ENCODE measurements at regions of chr1 and their contacts with region 1.

Region 1: DNA sequence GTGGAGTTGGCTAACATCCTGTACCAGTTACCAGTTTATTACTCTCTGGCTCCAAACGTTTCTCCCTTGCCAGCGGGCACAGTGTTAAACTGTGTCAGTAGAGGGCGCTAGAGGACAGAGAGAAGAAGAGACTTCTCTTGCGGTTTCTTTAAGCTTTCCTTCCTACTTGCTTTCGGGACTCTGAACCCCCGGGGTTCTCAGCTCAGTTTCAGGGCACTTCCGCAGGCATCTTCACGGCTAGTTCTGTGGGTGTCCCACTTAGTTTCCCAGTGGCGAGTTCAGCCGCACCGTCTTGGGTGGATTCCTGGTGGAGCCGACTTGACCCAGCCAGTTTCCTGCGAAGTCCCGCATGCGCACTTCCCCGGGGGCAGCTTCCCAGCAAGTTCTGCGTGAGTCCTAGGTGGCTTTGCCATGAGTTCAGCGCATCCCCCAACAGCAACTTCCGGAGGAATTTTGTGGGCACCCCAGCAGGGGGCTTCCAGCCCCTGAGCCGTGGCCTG is 37.9 kb upstream of the BTG2 start:
- DNase-seq: peak; percentile 83 to 88 (median 85)
- H3K4me3 ChIP-seq: peak overlapping the region; percentile 64 to 85
- H3K4me3 Mint-ChIP-seq: peak overlapping the region; percentile 84 to 92 (median 89)
- H3K27ac ChIP-seq: peak overlapping the region; percentile 75
- H3K27ac Mint-ChIP-seq: peak overlapping the region; percentile 79 to 96 (median 93)
- H3K4me1 ChIP-seq: peaks cover 32% of the 10 kb centered on the region
- H3K4me1 Mint-ChIP-seq: peaks cover 11 to 26% (median 22%) of the 10 kb centered on the region in 4 donors
- H3K27me3 ChIP-seq: no peaks in the 10 kb centered on the region
- H3K27me3 Mint-ChIP-seq: peaks cover 1 to 2% of the 10 kb centered on the region in 2 donors

Region 2: DNA sequence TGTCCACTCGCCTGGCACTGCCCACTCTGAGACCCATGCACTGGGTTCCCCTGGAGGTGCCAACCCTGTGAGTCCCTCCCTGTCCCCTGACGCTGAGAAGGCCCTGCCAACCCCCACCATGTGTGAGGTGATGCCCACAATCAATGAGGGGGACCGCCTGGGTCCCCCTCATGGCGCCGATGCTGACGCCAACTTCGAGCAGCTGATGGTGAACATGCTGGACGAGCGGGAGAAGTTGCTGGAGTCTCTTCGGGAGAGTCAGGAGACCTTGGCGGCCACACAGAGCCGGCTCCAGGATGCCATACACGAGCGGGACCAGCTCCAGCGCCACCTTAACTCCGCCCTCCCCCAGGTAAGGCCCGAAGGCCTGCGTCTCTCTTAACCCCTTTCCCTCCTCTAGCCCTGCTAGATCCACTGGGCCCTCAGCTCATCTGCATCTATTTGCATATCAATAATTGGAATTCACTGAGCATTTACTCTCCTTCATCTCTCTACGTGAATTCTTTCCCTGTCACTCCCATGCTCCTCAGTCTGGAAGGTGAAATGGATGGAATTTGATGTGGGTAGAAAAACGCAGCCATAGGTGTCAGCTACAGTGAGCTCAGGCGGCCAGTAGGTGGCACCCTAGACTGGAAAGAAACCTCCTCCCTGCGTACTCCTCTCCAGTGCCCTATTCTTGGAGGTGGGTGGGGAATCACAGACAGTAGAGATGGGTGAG is 228.3 kb before region 1 on chr1:
- CTCF ChIA-PET with region 1: interaction called, 56 read pairs
- POLR2A ChIA-PET with region 1: interaction called, 5 read pairs
- intact Hi-C with region 1: loop called (anchors 1 kb)
- DNase-seq: peak; percentile 50 to 55 (median 54)
- H3K4me3 ChIP-seq: no peak overlapping the region
- H3K4me3 Mint-ChIP-seq: no peak overlapping the region
- H3K27ac ChIP-seq: no peak overlapping the region
- H3K27ac Mint-ChIP-seq: no peak overlapping the region
- H3K4me1 ChIP-seq: no peaks in the 10 kb centered on the region
- H3K4me1 Mint-ChIP-seq: peaks cover 2 to 6% (median 4%) of the 10 kb centered on the region in 4 donors
- H3K27me3 ChIP-seq: no peaks in the 10 kb centered on the region
- H3K27me3 Mint-ChIP-seq: peaks cover 3 to 8% of the 10 kb centered on the region in 2 donors

Region 3: GRCh38 chr1:203239526-203240305 is 27.7 kb before region 1 on chr1:
- CTCF ChIA-PET with region 1: no interaction called
- POLR2A ChIA-PET with region 1: no interaction called
- intact Hi-C with region 1: no loop called
- DNase-seq: no peak
- H3K4me3 ChIP-seq: no peak overlapping the region
- H3K4me3 Mint-ChIP-seq: no peak overlapping the region
- H3K27ac ChIP-seq: no peak overlapping the region
- H3K27ac Mint-ChIP-seq: no peak overlapping the region
- H3K4me1 ChIP-seq: no peaks in the 10 kb centered on the region
- H3K4me1 Mint-ChIP-seq: no peaks in the 10 kb centered on the region
- H3K27me3 ChIP-seq: no peaks in the 10 kb centered on the region
- H3K27me3 Mint-ChIP-seq: peaks cover 31 to 32% of the 10 kb centered on the region in 2 donors

Region 4: DNA sequence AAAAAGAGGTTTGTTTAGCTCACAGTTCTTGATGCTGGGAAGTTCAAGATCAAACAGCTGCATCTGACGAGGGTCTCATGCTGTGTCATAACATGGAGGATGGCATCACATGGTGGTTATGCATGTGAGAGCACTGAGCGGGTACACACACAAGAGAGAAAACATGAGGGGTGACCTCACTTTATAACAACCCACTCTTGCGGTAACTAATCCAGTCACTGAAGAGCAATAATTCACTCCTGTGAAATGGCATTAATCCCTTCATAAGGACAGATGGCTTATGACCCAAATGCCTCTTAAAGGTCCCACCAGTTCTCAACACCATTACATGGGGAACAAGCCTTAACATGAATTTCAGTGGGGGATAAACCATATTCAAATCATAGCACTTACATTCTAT is 14.7 kb before region 1 on chr1:
- CTCF ChIA-PET with region 1: interaction called, 13 read pairs
- POLR2A ChIA-PET with region 1: interaction called, 3 read pairs
- intact Hi-C with region 1: no loop called
- DNase-seq: no peak
- H3K4me3 ChIP-seq: no peak overlapping the region
- H3K4me3 Mint-ChIP-seq: no peak overlapping the region
- H3K27ac ChIP-seq: no peak overlapping the region
- H3K27ac Mint-ChIP-seq: no peak overlapping the region
- H3K4me1 ChIP-seq: no peaks in the 10 kb centered on the region
- H3K4me1 Mint-ChIP-seq: no peaks in the 10 kb centered on the region
- H3K27me3 ChIP-seq: no peaks in the 10 kb centered on the region
- H3K27me3 Mint-ChIP-seq: peaks cover 37 to 57% of the 10 kb centered on the region in 2 donors

Region 5: GRCh38 chr1:203320591-203321272 is 53.3 kb after region 1 on chr1:
- CTCF ChIA-PET with region 1: interaction called, 320 read pairs
- POLR2A ChIA-PET with region 1: interaction called, 877 read pairs
- intact Hi-C with region 1: no loop called
- DNase-seq: peak; percentile 83 to 90 (median 87)
- H3K4me3 ChIP-seq: peak overlapping the region in 1 of 2 donors; percentile 27
- H3K4me3 Mint-ChIP-seq: peak overlapping the region; percentile 61 to 93 (median 83)
- H3K27ac ChIP-seq: peak overlapping the region; percentile 70
- H3K27ac Mint-ChIP-seq: peak overlapping the region; percentile 91 to 99 (median 98)
- H3K4me1 ChIP-seq: peaks cover 94% of the 10 kb centered on the region
- H3K4me1 Mint-ChIP-seq: peaks cover 72 to 93% (median 84%) of the 10 kb centered on the region in 4 donors
- H3K27me3 ChIP-seq: no peaks in the 10 kb centered on the region
- H3K27me3 Mint-ChIP-seq: no peaks in the 10 kb centered on the region

Region 6: GRCh38 chr1:203340112-203340804 is 72.9 kb after region 1 on chr1:
- CTCF ChIA-PET with region 1: interaction called, 921 read pairs
- POLR2A ChIA-PET with region 1: interaction called, 145 read pairs
- intact Hi-C with region 1: loop called (anchors 1 kb)
- DNase-seq: peak; percentile 61 to 68 (median 63)
- H3K4me3 ChIP-seq: no peak overlapping the region
- H3K4me3 Mint-ChIP-seq: peak overlapping the region in 1 of 8 donors; percentile 6
- H3K27ac ChIP-seq: no peak overlapping the region
- H3K27ac Mint-ChIP-seq: peak overlapping the region in 6 of 7 donors; percentile 1 to 78 (median 48)
- H3K4me1 ChIP-seq: peaks cover 16% of the 10 kb centered on the region
- H3K4me1 Mint-ChIP-seq: peaks cover 23 to 36% (median 28%) of the 10 kb centered on the region in 4 donors
- H3K27me3 ChIP-seq: peaks cover 8% of the 10 kb centered on the region
- H3K27me3 Mint-ChIP-seq: peaks cover 4 to 26% of the 10 kb centered on the region in 2 donors

Region 7: DNA sequence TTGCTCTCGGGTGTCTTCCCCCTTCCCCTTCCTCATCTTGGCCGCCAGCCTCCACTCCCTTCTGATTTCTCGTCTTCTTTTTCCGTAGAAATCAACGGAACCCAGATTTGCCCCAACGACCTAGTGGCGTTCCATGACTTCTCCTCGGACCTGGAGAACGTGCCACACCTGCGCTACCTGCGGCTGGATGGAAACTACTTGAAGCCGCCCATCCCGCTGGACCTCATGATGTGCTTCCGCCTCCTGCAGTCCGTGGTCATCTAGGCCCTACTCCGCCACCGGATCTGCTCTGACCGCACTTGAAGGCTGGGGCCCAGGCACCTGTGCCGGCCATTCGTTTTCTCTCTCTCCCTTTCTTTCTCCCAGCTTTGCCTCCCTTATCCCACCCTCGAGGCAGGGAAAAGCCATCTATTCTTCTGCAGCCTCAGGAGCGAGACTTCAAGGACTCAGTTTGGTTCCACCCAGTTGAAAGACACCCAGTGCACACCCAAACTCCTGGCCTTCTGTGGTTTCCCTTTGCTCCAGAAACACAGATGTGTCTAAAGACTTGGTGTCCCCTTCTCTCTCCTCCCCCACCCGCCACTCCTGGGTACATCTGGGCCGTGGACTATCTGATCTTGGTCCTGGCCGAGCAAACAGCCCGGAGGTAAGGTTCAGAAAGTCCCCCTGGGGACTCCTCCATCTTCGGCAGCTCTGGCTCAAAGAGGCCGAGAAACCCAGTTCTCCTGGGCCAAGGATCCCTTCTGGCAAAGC is 219.4 kb after region 1 on chr1:
- CTCF ChIA-PET with region 1: interaction called, 424 read pairs
- POLR2A ChIA-PET with region 1: interaction called, 39 read pairs
- intact Hi-C with region 1: loop called (anchors 1 kb)
- DNase-seq: no peak
- H3K4me3 ChIP-seq: no peak overlapping the region
- H3K4me3 Mint-ChIP-seq: peak overlapping the region; percentile 79 to 86 (median 84)
- H3K27ac ChIP-seq: no peak overlapping the region
- H3K27ac Mint-ChIP-seq: peak overlapping the region in 4 of 7 donors; percentile 42 to 89 (median 76)
- H3K4me1 ChIP-seq: peaks cover 13% of the 10 kb centered on the region
- H3K4me1 Mint-ChIP-seq: peaks cover 1 to 22% (median 11%) of the 10 kb centered on the region in 4 donors
- H3K27me3 ChIP-seq: peaks cover 4% of the 10 kb centered on the region
- H3K27me3 Mint-ChIP-seq: peaks cover 2 to 4% of the 10 kb centered on the region in 2 donors

Region 8: GRCh38 chr1:203702130-203702577 is 434.8 kb after region 1 on chr1:
- CTCF ChIA-PET with region 1: interaction called, 11 read pairs
- POLR2A ChIA-PET with region 1: no interaction called
- intact Hi-C with region 1: loop called (anchors 1 kb)
- DNase-seq: peak; percentile 46 to 68 (median 57)
- H3K4me3 ChIP-seq: no peak overlapping the region
- H3K4me3 Mint-ChIP-seq: no peak overlapping the region
- H3K27ac ChIP-seq: no peak overlapping the region
- H3K27ac Mint-ChIP-seq: peak overlapping the region; percentile 26 to 97 (median 89)
- H3K4me1 ChIP-seq: peaks cover 3% of the 10 kb centered on the region
- H3K4me1 Mint-ChIP-seq: peaks cover 5 to 15% (median 10%) of the 10 kb centered on the region in 4 donors
- H3K27me3 ChIP-seq: no peaks in the 10 kb centered on the region
- H3K27me3 Mint-ChIP-seq: no peaks in the 10 kb centered on the region

Measured in CD4-positive, alpha-beta memory T cell (primary cell).